Breast epithelium (tissue), 4 donors: ENCODE measurements at regions of chr16 and their contacts with region 1.

Region 1: DNA sequence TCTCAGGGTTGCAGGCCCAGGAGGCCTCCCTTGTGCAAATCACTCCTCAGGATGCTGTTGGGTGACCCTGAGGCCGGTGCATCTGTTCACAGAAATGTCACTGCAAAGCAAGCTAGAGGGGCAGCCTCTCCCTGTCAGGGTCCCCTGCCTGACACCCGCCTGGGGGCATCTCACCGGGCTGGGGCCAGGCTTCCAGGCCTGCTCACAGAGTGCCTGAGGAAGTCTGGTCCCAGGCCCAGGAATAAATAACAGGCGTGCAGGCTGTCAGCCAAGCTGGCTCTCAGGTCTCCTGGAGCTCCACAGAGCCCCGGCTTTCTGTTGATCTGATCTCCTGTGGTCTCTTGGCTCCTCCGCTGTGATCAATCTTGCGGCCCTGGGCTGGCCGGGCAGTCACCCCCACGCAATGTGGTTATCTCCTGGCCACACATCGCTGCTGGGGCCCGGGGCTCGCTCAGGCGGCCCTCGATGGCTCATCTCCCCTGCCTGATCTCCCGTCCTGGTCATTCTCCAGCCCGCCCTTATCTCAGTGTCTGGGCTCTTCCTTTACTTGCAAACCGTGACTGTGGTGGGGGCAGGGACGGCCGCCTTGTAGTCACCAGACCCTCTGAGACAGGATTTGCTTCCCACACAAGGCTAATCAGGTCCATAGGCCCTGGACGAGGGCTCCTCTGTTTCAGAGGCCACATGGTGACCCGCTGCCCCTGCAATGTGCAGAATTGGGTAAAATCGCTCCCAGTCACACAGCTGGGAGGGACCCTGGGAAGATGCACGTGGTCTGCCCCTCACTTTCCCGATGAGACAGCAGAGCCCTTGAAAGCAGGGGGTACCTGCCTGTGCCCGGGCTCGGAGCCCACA is 231.2 kb upstream of the GSE1 start:
- DNase-seq: no peak
- H3K4me3 ChIP-seq: no peak overlapping the region
- H3K27ac ChIP-seq: peak overlapping the region; percentile 25 to 74
- H3K4me1 ChIP-seq: peaks cover 21 to 30% of the 10 kb centered on the region in 2 donors
- H3K27me3 ChIP-seq: no peaks in the 10 kb centered on the region
- CTCF ChIP-seq: no peak
- POLR2A ChIP-seq: no peak

Region 2: DNA sequence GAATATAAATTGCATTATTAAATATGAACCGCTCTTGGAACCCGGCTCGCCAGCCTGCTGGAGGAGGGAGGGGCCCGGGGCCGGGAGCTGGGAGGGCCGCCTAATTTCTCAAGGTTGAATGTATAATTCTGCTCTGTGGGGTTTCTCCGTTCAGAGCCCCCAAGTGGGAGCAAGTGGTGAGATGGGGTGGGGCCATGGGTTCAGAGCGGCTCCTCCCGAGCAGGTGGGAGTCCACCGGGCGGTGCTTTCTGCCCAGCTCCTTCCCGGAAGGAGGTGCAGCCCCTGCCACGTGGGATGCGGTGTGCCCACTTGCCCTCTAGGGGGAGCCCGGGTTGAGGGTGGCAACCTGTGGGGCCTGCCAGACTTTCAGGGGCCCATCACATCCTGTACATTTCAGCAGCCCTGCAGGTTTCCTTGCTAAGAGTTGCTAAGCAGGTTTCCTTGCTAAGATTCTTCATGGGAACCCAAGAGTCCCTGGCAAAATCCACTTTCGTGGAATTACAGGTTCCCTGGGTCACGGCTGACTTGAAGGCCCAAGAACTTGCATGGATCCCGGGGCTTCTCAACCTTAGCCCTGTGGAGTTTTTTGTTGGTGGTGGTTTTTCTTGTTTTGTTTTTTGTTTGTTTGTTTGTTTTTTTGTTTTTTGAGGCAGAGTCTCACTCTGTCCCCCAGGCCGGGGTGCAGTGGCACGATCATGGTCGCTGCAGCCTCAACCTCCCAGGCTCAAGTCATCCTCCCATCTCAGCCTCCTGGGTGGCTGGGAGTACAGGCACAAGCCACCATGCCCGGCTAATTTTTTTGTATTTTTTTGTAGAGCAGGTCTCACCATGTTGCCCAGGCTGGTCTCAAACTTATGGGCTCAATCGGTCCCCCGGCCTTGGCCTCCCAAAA is 34.5 kb after region 1 on chr16:
- intact Hi-C with region 1: loop called (anchors 2 kb)
- DNase-seq: peak in 1 of 2 donors; percentile 74
- H3K4me3 ChIP-seq: no peak overlapping the region
- H3K27ac ChIP-seq: no peak overlapping the region
- H3K4me1 ChIP-seq: no peaks in the 10 kb centered on the region
- H3K27me3 ChIP-seq: no peaks in the 10 kb centered on the region
- CTCF ChIP-seq: peak; percentile 39 to 64 (median 50)
- POLR2A ChIP-seq: no peak